ENCODE measurements at regions of chr17 and their contacts with region 1.

Region 1: DNA sequence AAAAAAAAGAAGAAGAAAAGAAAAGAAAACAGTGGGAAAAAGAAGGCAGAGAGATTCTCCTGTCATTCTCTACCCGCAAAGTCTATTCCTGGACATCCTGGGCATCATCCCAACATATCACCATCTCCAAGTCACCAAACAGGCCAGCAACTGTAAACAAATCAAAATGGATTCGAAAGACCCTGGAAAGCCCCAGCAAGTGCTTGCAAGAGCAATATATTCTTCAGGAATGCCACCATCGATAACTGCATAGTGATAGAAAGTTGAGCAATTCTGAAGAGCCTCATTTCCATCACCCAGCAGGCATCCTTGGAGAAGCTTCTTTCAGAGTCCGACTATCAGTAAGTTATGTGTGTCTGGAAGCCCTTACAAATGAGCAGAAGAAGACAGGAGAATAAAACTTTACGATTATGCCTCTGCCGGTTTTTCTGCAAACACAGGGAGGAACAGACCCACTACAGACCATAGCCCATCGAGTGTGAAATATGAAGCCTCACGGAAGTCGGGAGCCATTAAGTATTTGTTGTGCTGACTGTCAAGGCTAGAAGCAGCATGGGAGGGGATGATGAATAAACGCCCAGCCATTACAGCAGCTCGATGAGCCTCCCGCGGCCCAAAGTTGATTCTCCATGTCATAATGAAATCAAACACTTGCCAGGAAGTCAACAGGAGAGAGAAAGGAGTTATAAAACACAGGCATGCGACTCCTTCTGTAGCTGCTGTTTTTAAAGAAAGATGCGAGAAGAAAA is 64.5 kb upstream of the SEC14L1 start:
- DNase-seq: no peak
- H3K4me3 ChIP-seq: no peak overlapping the region
- H3K27ac ChIP-seq: no peak overlapping the region
- H3K4me1 ChIP-seq: no peaks in the 10 kb centered on the region
- H3K27me3 ChIP-seq: peaks cover 7% of the 10 kb centered on the region
- CTCF ChIP-seq: no peak

Region 2: DNA sequence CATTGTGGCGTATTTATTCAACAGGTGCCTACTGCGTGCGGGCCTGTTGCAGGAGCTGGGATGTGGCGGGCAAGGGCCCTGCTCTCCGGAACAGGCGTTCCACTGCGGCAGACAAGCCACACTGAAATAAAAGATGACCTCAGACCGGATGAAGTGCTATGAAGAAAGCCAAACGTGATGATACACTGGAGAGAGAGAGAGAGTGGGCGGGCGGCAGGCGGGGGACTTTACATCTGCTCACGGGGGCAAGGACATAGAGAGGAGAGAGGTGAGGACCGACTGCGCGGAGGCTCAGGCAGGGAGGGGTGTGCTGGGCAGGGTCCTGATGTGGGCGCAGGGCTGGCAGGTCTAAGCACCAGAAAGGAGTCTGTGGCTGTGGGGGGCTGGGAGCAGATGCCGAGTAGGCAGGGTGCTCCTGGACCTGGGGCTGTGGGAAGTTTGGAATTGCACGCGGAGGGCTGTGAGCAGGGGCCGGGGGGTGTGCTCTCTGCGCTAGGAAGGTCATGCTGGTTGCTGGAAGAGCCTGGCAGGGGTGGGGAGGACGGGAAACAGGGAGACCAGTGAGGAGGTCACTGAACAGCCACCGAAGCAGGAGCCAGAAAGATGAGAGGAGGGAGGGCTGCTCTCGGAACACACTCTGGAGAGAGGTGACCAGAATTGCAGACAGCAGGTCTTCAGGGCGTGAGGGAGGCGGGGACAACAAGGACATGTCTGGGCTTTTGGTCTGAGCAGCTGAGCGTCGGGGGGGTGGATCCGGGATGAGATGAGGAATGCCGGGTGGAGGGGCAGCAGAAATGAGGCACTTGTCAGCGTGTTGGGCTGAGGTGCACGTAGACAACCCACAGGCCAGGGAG is 375.5 kb before region 1 on chr17:
- CTCF ChIA-PET with region 1: no interaction called
- dilution Hi-C with region 1: no loop called
- in situ Hi-C with region 1: no loop called
- intact Hi-C with region 1: no loop called
- DNase-seq: peak; percentile 82
- H3K4me3 ChIP-seq: peak overlapping the region in 2 of 3 experiments; percentile 27 to 32
- H3K27ac ChIP-seq: peak overlapping the region; percentile 43
- H3K4me1 ChIP-seq: peaks cover 29% of the 10 kb centered on the region
- H3K27me3 ChIP-seq: no peaks in the 10 kb centered on the region
- CTCF ChIP-seq: no peak

Region 3: DNA sequence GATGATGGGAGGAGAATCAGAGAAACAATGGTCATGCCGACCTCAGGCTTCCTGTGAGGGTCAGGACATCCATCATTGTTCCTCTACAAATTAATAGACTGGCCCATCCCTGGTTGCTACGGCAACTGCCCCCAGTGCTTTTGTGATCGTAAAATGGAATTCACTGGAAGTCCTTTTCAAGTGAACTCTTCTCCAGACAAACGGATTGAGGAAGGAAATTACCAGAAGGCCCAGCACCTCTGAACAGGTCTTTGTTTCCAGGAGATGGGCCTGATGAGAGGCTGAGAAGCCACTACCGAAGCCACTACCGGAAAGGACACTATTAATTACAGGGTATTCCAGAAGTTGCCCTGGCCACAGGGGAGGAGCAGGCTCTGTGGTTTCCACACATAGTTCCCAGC is 82.1 kb before region 1 on chr17:
- CTCF ChIA-PET with region 1: no interaction called
- dilution Hi-C with region 1: loop called (anchors 5 kb)
- in situ Hi-C with region 1: no loop called
- intact Hi-C with region 1: no loop called
- DNase-seq: no peak
- H3K4me3 ChIP-seq: no peak overlapping the region
- H3K27ac ChIP-seq: no peak overlapping the region
- H3K4me1 ChIP-seq: no peaks in the 10 kb centered on the region
- H3K27me3 ChIP-seq: no peaks in the 10 kb centered on the region
- CTCF ChIP-seq: no peak

Region 4: GRCh38 chr17:77019955-77020379 is 56.3 kb before region 1 on chr17:
- CTCF ChIA-PET with region 1: no interaction called
- dilution Hi-C with region 1: loop called (anchors 5 kb)
- in situ Hi-C with region 1: no loop called
- intact Hi-C with region 1: no loop called
- DNase-seq: no peak
- H3K4me3 ChIP-seq: no peak overlapping the region
- H3K27ac ChIP-seq: no peak overlapping the region
- H3K4me1 ChIP-seq: no peaks in the 10 kb centered on the region
- H3K27me3 ChIP-seq: no peaks in the 10 kb centered on the region
- CTCF ChIP-seq: no peak

Region 5: DNA sequence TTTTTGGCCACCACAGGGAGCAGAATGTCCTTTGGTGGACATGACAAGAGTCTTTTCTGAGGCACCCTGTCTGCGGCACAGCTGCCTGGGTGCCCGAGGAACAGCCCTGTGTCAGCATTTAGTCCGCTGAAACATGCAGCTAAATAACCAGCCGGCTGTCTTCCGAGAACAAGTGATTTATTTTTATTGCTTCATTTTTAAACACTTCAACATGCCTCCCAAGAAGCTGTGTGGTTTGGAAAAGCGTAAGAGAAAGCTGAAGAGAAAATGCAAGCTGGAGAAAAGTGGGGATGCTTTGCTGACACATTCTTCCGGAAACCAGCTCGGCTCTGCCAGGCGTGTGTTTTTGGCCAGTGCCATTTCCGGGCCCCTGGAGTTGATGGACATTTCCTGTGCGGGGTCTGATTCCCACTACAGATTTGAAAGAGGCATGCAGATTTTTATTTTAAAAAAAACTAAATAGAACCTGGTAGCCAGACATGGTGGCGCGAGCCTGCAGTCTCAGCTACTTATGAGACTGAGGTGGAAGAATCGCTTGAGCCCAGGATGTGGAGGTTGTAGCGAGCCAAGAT is 159.2 kb after region 1 on chr17:
- CTCF ChIA-PET with region 1: no interaction called
- dilution Hi-C with region 1: loop called (anchors 5 kb)
- in situ Hi-C with region 1: no loop called
- intact Hi-C with region 1: no loop called
- DNase-seq: no peak
- H3K4me3 ChIP-seq: no peak overlapping the region
- H3K27ac ChIP-seq: no peak overlapping the region
- H3K4me1 ChIP-seq: no peaks in the 10 kb centered on the region
- H3K27me3 ChIP-seq: no peaks in the 10 kb centered on the region
- CTCF ChIP-seq: no peak